CD14-positive monocyte (primary cell): ENCODE measurements at regions of chr3 and their contacts with region 1.

Region 1: DNA sequence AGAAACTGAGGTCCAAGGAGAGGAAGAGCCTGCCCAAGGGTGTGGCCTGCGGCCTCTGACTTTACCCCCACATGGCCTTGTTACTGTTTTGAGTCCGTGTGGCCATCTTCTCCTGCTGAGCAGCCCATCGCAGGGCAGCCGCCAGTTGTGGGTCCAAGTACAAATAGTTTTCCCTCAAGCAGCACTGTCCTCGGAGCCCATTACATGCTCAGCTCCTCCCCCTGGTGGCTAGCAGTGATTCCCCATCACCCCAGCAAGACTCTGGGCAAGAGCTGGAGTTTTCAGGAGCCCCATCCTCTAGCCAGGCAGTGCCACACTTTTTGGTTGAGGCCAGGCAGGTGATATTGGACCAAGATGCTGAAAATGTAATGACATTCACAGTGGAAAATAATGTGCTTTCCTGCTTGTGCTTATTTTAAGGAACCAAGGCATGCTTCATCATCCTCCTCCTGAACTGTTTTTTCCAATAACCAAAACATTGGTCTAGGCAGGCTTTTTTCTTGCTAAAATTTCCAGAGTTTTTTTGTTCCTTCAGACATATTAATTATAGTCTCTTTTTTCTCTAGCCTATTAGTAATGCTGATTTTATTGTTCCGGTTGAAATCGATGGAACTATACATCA is 23.2 kb upstream of the VILL start:
- DNase-seq: peak; percentile 51 to 62 (median 52)
- H3K4me3 ChIP-seq: no peak overlapping the region
- H3K4me3 Mint-ChIP-seq: no peak overlapping the region
- H3K27ac ChIP-seq: no peak overlapping the region
- H3K27ac Mint-ChIP-seq: no peak overlapping the region
- H3K4me1 ChIP-seq: no peaks in the 10 kb centered on the region
- H3K4me1 Mint-ChIP-seq: peaks cover 4% of the 10 kb centered on the region
- H3K27me3 ChIP-seq: no peaks in the 10 kb centered on the region
- H3K27me3 Mint-ChIP-seq: peaks cover 0 to 2% (median 0%) of the 10 kb centered on the region in 3 donors
- CTCF ChIP-seq: peak; percentile 92

Region 2: DNA sequence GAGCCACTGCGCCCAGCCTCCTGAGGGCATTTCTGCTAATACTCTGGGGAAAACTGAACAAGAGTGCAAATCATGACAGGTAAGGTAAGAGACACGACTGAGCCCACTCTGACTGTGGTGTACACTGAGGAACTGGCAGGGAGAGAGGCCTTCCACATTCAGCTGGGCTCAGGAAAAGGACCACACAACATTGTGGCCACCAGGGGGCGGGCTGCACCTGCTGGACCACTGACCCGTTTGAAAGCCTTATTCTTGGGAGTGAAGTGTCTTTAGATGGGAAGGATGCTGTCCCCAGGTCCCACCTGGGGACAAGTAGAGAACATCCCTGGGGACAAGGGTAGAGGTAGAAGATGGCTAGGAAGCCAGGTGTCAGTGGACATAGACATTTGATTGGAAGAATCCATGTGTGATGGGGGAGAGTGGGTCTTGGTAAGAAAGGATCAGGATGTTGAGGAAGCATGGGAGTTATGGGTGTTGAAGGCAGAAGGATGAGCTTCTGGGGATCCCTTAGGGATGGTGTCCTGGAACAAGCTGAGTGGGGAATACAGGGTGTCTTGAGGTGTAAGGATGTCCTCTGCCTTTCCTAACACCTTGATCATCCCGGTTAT is 111.9 kb before region 1 on chr3:
- intact Hi-C with region 1: loop called (anchors 2 kb)
- DNase-seq: peak; percentile 68 to 76 (median 74)
- H3K4me3 ChIP-seq: no peak overlapping the region
- H3K4me3 Mint-ChIP-seq: no peak overlapping the region
- H3K27ac ChIP-seq: no peak overlapping the region
- H3K27ac Mint-ChIP-seq: peak overlapping the region in 1 of 7 donors; percentile 66
- H3K4me1 ChIP-seq: peaks cover 5 to 8% of the 10 kb centered on the region in 2 donors
- H3K4me1 Mint-ChIP-seq: peaks cover 6% of the 10 kb centered on the region
- H3K27me3 ChIP-seq: no peaks in the 10 kb centered on the region
- H3K27me3 Mint-ChIP-seq: peaks cover 0 to 4% (median 3%) of the 10 kb centered on the region in 3 donors
- CTCF ChIP-seq: peak; percentile 97

Region 3: DNA sequence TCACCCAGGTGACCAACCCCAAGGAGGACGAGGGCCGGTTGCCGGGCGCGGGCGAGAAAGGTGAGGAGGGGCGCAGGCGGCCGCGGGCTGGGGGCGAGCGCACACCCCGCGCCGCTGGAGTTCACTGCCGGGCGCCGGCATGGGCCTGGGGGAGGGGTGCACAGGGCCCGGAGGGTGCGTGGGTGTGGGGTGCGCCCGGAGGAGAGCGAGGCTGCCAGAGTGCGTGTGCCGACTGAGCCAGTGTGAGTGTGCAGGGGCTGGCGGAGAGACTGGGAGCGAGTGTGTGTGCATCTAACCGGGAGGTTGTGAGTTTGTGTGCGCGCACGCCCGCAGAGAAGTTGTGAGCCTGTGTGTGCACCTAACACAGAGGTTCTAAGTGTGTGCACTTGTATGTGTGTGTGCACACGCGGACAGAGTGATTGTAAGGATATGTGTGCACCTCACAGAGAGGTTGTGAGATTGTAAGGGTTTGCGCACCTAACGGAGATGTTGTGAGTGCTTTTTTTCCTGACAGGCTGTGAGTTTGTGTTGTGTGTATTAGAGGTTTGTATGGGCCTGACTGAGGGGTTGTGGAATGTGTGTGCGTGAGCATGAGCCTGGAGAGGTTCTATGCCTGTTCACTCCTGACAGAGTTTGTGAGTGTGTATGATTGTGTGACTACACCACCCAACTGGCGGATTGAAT is 105.0 kb before region 1 on chr3:
- intact Hi-C with region 1: loop called (anchors 2 kb)
- DNase-seq: no peak
- H3K4me3 ChIP-seq: peak overlapping the region; percentile 20 to 72 (median 31)
- H3K4me3 Mint-ChIP-seq: peak overlapping the region; percentile 84 to 93
- H3K27ac ChIP-seq: no peak overlapping the region
- H3K27ac Mint-ChIP-seq: peak overlapping the region in 4 of 7 donors; percentile 49 to 78 (median 68)
- H3K4me1 ChIP-seq: peaks cover 19 to 27% of the 10 kb centered on the region in 2 donors
- H3K4me1 Mint-ChIP-seq: peaks cover 26% of the 10 kb centered on the region
- H3K27me3 ChIP-seq: peaks cover 0 to 8% of the 10 kb centered on the region in 2 donors
- H3K27me3 Mint-ChIP-seq: peaks cover 13 to 19% (median 14%) of the 10 kb centered on the region in 3 donors
- CTCF ChIP-seq: no peak

Region 4: GRCh38 chr3:37907906-37908305 is 59.5 kb before region 1 on chr3:
- intact Hi-C with region 1: no loop called
- DNase-seq: no peak
- H3K4me3 ChIP-seq: no peak overlapping the region
- H3K4me3 Mint-ChIP-seq: no peak overlapping the region
- H3K27ac ChIP-seq: no peak overlapping the region
- H3K27ac Mint-ChIP-seq: no peak overlapping the region
- H3K4me1 ChIP-seq: peaks cover 0 to 4% of the 10 kb centered on the region in 2 donors
- H3K4me1 Mint-ChIP-seq: peaks cover 16% of the 10 kb centered on the region
- H3K27me3 ChIP-seq: no peaks in the 10 kb centered on the region
- H3K27me3 Mint-ChIP-seq: no peaks in the 10 kb centered on the region
- CTCF ChIP-seq: no peak

Region 5: DNA sequence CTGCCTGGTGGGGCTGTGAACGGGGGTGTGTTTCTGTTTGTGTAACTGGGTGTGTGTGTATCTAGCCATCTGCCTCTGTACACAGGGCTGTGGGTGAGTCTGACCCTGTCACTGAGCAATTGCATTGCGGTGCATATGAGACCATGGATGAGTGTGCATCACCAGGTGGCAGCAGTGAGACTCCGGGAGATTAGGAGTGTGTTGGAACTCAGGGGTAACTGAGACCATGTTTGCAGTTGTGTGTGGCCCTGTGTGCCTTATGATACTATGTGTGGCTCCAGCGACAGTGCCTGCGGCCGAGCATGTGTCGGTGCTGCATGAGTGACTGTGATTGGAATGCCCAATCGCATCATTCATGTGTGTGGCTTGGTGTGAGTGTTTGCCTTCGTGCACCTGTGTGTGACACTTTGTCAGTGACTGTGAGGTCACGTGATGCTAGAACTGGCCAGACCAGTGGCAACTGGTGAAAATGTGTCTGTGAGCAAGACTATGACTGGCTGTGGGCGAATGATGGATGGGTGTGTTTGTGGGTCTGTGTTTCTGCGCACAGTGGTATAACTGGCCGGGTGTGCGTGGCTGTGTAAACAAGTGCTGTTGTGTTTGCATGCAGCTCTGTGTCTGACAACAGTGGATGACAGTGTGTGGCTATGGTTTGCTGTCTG is 37.2 kb after region 1 on chr3:
- intact Hi-C with region 1: loop called in 1 of 2 experiments (anchors 5 kb)
- DNase-seq: peak; percentile 32 to 43 (median 40)
- H3K4me3 ChIP-seq: no peak overlapping the region
- H3K4me3 Mint-ChIP-seq: no peak overlapping the region
- H3K27ac ChIP-seq: peak overlapping the region in 1 of 2 donors; percentile 49
- H3K27ac Mint-ChIP-seq: peak overlapping the region in 4 of 7 donors; percentile 19 to 82 (median 44)
- H3K4me1 ChIP-seq: peaks cover 0 to 12% of the 10 kb centered on the region in 2 donors
- H3K4me1 Mint-ChIP-seq: peaks cover 15% of the 10 kb centered on the region
- H3K27me3 ChIP-seq: no peaks in the 10 kb centered on the region
- H3K27me3 Mint-ChIP-seq: peaks cover 0 to 4% (median 2%) of the 10 kb centered on the region in 3 donors
- CTCF ChIP-seq: peak; percentile 47

Region 6: DNA sequence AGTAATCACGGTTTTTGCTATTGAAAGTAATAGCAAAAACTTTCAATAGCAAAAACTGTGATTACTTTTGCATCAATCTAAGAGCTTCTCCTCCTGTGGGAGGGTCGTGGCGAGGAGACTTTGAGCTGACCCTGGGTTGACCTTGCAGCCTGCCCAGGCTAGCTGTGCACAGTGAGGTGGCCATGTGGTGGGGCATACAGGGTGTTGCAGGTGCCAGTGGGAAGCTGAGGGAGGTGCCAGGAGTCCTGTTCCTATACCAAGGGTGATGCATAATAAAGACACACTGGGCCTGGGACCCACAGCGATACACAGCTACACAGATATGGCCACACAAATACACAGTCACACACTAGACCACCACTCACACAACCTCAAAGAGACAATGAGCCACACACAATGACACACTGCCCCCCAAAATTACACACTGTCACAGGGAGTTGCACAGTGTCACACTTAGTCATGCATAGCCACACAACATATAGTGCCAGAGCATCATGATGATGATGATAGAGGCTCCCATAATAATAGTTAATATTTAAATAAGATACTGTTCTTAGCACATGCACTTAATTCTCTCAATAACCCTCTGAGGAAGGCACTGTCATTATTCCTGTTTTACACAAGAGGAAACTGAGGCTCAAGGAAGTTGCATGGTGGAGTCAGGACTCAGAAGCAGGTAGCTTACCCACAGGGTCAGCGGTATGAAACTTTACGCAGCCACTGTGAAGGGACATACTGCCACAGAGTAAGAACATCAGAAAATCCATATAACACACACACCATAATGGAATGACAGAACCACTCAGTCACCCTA is 55.7 kb after region 1 on chr3:
- intact Hi-C with region 1: no loop called
- DNase-seq: peak in 1 of 3 donors; percentile 58
- H3K4me3 ChIP-seq: no peak overlapping the region
- H3K4me3 Mint-ChIP-seq: peak overlapping the region in 1 of 2 donors; percentile 99
- H3K27ac ChIP-seq: peak overlapping the region in 1 of 2 donors; percentile 93
- H3K27ac Mint-ChIP-seq: peak overlapping the region in 2 of 7 donors; percentile 97 to 99
- H3K4me1 ChIP-seq: peaks cover 19 to 21% of the 10 kb centered on the region in 2 donors
- H3K4me1 Mint-ChIP-seq: peaks cover 21% of the 10 kb centered on the region
- H3K27me3 ChIP-seq: peaks cover 5 to 14% of the 10 kb centered on the region in 2 donors
- H3K27me3 Mint-ChIP-seq: peaks cover 13 to 17% (median 14%) of the 10 kb centered on the region in 3 donors
- CTCF ChIP-seq: no peak